ENCODE measurements at regions of chr16 and their contacts with region 1.

Region 1: DNA sequence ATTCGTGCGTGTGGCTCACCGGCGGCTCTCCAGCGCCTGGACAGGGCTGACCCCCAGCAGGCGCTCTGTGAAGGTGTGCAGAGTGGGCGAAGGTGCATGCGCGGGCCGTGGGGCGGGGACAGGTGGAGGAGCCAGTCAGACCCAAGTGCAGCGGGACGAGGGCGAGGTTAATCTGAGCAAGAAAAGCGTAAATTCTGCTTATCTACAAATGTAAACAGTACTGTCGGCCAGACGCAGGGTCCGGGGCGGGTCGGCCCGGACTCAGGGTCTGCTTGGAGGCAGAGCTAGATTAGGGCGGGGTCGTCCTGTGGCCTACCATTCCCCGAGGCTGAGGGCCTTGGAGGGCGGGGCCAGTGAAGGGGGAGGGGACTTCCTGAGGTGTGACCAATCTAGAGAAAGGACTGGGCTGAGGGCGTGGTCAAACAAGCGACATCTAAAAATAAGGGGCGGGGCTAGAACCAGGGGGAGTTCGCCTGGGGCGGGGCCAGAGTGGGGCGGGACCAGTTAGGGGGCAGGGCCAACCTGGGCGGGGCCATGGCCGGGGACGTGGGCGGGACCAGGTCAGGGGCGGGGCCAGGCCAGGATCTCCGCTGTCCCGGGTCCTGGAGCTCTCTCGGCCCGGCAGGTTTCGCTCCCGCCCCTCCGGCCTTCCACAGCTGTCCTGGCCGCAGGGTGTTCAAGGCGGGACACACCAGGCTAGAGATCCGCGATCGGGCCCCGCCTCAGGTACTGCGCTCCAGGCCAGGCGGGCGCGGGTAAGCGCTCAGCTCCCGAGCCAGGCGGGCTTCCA is at the start of gene SEC14L5:
- DNase-seq: peak; percentile 100
- ATAC-seq: peak; percentile 93
- H3K4me3 ChIP-seq: peak within 1 kb of the TSS; percentile 62 to 77 (median 62)
- H3K27ac ChIP-seq: peak within 1 kb of the TSS; percentile 77
- H3K4me1 ChIP-seq: peaks cover 23% of the 10 kb centered on the region
- H3K27me3 ChIP-seq: peaks cover 0 to 18% of the 10 kb centered on the region in 2 experiments; a peak in 3 of 5 replicates
- CTCF ChIP-seq: peak; percentile 61
- EP300 ChIP-seq: no peak; a peak in 1 of 4 replicates
- POLR2A ChIP-seq: peak; percentile 74 to 85
- RAD21 ChIP-seq: peak; percentile 41; the same call in 1 of the 2 replicates
- total RNA-seq, gene SEC14L5: 0.36 and 0.42 TPM in 2 replicates

Region 2: DNA sequence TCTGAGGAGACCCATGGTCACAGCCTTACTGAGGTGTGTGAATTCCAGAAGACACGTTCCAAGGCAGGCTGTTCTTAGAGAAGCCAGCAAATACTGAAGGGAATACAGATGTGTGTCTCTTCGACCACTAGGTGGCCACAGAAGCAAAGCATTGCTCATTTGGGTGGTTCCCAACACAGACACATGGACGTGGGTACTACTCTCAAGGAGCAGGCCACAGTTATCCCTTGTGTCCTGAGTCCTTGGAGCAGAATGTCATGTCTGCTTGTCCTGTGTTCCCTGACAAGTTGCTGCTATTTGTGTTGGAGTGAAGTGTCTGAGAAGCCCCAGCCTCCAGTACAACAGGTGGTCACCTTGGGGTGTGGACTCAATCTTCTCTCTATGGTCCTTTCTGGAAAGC is 451.5 kb before region 1 on chr16:
- CTCF ChIA-PET with region 1: no interaction called
- POLR2A ChIA-PET with region 1: no interaction called
- in situ Hi-C with region 1: loop called (anchors 25 kb)
- intact Hi-C with region 1: no loop called
- DNase-seq: peak; percentile 59
- ATAC-seq: peak; percentile 76
- H3K4me3 ChIP-seq: no peak overlapping the region
- H3K27ac ChIP-seq: no peak overlapping the region
- H3K4me1 ChIP-seq: peaks cover 7% of the 10 kb centered on the region
- H3K27me3 ChIP-seq: no peaks in the 10 kb centered on the region
- CTCF ChIP-seq: peak; percentile 91
- EP300 ChIP-seq: no peak
- POLR2A ChIP-seq: peak in 1 of 2 experiments; percentile 39; a peak in 1 of 4 replicates
- RAD21 ChIP-seq: peak; percentile 72

Region 3: GRCh38 chr16:4734063-4734729 is 223.7 kb before region 1 on chr16 and contains the starts of genes ANKS3 and DNAAF8:
- CTCF ChIA-PET with region 1: no interaction called
- POLR2A ChIA-PET with region 1: interaction called, 13 read pairs
- in situ Hi-C with region 1: no loop called
- intact Hi-C with region 1: no loop called
- DNase-seq: peak; percentile 96
- ATAC-seq: peak; percentile 96
- H3K4me3 ChIP-seq: peak within 1 kb of the TSS; percentile 98 to 100 (median 100)
- H3K27ac ChIP-seq: peak within 1 kb of the TSS; percentile 80
- H3K4me1 ChIP-seq: peaks cover 20% of the 10 kb centered on the region
- H3K27me3 ChIP-seq: no peaks in the 10 kb centered on the region; a peak in 2 of 5 replicates
- CTCF ChIP-seq: peak; percentile 12; the same call in 1 of the 2 replicates
- EP300 ChIP-seq: no peak
- POLR2A ChIP-seq: peak; percentile 46 to 68
- RAD21 ChIP-seq: peak; percentile 48; the same call in 1 of the 2 replicates
- total RNA-seq, gene ANKS3: 6.6 and 15.9 TPM in 2 replicates
- total RNA-seq, gene DNAAF8: 0.38 and 0.44 TPM in 2 replicates

Region 4: DNA sequence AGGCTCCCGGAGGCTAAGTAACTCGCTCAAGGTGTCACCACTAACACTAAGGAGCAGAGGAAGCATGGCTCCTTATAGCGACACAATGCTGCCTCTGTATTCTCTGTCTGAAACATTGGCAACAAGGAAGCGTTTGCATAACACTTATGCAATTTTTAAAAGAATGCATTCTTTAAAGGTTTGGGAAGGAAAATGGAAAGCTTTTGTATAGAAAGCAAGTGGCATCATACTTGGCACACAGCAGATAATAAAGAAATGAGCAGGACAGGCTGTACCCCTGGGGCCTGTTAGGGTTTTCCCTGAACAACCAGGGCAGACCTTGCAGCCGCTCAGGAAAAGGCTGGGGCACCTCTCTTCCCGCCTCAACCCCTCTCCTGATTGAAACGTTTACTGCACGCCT is 57.9 kb before region 1 on chr16:
- CTCF ChIA-PET with region 1: no interaction called
- POLR2A ChIA-PET with region 1: no interaction called
- in situ Hi-C with region 1: loop called (anchors 5 kb)
- intact Hi-C with region 1: no loop called
- DNase-seq: no peak
- ATAC-seq: no peak
- H3K4me3 ChIP-seq: no peak overlapping the region
- H3K27ac ChIP-seq: no peak overlapping the region
- H3K4me1 ChIP-seq: no peaks in the 10 kb centered on the region
- H3K27me3 ChIP-seq: no peaks in the 10 kb centered on the region
- CTCF ChIP-seq: no peak
- EP300 ChIP-seq: no peak
- POLR2A ChIP-seq: no peak
- RAD21 ChIP-seq: no peak

Region 5: GRCh38 chr16:4944333-4945281 is 13.3 kb before region 1 on chr16:
- CTCF ChIA-PET with region 1: no interaction called
- POLR2A ChIA-PET with region 1: interaction called, 62 read pairs
- in situ Hi-C with region 1: no loop called
- intact Hi-C with region 1: no loop called
- DNase-seq: peak; percentile 98
- ATAC-seq: peak; percentile 82
- H3K4me3 ChIP-seq: peak overlapping the region; percentile 9 to 63 (median 15); a peak in 4 of 6 replicates
- H3K27ac ChIP-seq: peak overlapping the region; percentile 62
- H3K4me1 ChIP-seq: peaks cover 91% of the 10 kb centered on the region
- H3K27me3 ChIP-seq: no peaks in the 10 kb centered on the region; a peak in 1 of 5 replicates
- CTCF ChIP-seq: peak; percentile 12; the same call in 1 of the 2 replicates
- EP300 ChIP-seq: peak; percentile 80 to 84
- POLR2A ChIP-seq: peak in 1 of 2 experiments; percentile 56; a peak in 2 of 4 replicates
- RAD21 ChIP-seq: peak; percentile 62

Region 6: DNA sequence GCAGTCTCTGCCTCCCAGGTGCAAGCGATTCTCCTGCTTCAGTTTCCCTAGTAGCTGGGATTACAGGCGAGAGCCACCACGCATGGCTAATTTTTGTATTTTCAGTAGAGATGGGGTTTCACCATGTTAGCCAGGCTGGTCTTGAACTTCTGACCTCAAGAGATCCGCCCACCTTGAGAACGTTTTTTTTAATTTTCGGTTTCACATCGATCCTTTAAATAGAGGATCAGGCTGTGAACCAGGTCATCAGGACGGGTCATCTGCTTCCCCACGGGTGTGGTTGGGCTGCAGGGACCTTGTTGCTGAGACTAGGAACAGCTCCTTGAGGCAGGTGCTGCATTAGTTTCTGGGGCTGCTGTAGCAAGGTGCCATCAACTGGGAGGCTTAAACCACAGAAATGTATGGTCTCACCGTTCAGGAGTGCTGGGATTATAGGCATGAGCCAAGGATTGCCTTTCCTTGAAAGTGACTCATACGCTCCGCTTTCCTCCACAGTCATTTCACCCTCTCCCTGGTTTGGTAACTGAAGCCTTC is 83.8 kb after region 1 on chr16:
- CTCF ChIA-PET with region 1: interaction called, 11 read pairs
- POLR2A ChIA-PET with region 1: interaction called, 27 read pairs
- in situ Hi-C with region 1: no loop called
- intact Hi-C with region 1: loop called (anchors 1 kb)
- DNase-seq: no peak
- ATAC-seq: no peak; the same call in 2 of the 3 replicates
- H3K4me3 ChIP-seq: peak overlapping the region in 1 of 3 experiments; percentile 8; a peak in 1 of 6 replicates
- H3K27ac ChIP-seq: no peak overlapping the region
- H3K4me1 ChIP-seq: peaks cover 66% of the 10 kb centered on the region
- H3K27me3 ChIP-seq: peaks cover 0 to 8% of the 10 kb centered on the region in 2 experiments; a peak in 2 of 5 replicates
- CTCF ChIP-seq: no peak
- EP300 ChIP-seq: no peak
- POLR2A ChIP-seq: no peak
- RAD21 ChIP-seq: no peak